Dendritic cell treated with granulocyte-macrophage colony-stimulating factor and Interleukin-4, amounts not matched to agents 40 ng/mL and 50 ng/mL, for 4 days (primary cell): ENCODE measurements at regions of chr11 and their contacts with region 1.

Region 1: GRCh38 chr11:10328314-10329090 is 23.6 kb downstream of the ADM start:
- H3K4me3 Mint-ChIP-seq: peak overlapping the region; percentile 15
- H3K27ac Mint-ChIP-seq: peak overlapping the region; percentile 87
- H3K4me1 Mint-ChIP-seq: peaks cover 23% of the 10 kb centered on the region
- H3K27me3 Mint-ChIP-seq: peaks cover 3% of the 10 kb centered on the region

Region 2: GRCh38 chr11:10293423-10294289 is 34.8 kb before region 1 on chr11 and contains the start of gene SBF2:
- intact Hi-C with region 1: loop called (anchors 2 kb)
- H3K4me3 Mint-ChIP-seq: peak within 1 kb of the TSS; percentile 79
- H3K27ac Mint-ChIP-seq: peak within 1 kb of the TSS; percentile 85
- H3K4me1 Mint-ChIP-seq: peaks cover 64% of the 10 kb centered on the region
- H3K27me3 Mint-ChIP-seq: no peaks in the 10 kb centered on the region

Region 3: GRCh38 chr11:10366568-10367370 is 38.3 kb after region 1 on chr11:
- intact Hi-C with region 1: loop called (anchors 5 kb)
- H3K4me3 Mint-ChIP-seq: no peak overlapping the region
- H3K27ac Mint-ChIP-seq: peak overlapping the region; percentile 24
- H3K4me1 Mint-ChIP-seq: peaks cover 15% of the 10 kb centered on the region
- H3K27me3 Mint-ChIP-seq: peaks cover 4% of the 10 kb centered on the region